CD14-positive monocyte (primary cell): ENCODE measurements at regions of chr9 and their contacts with region 1.

Region 1: DNA sequence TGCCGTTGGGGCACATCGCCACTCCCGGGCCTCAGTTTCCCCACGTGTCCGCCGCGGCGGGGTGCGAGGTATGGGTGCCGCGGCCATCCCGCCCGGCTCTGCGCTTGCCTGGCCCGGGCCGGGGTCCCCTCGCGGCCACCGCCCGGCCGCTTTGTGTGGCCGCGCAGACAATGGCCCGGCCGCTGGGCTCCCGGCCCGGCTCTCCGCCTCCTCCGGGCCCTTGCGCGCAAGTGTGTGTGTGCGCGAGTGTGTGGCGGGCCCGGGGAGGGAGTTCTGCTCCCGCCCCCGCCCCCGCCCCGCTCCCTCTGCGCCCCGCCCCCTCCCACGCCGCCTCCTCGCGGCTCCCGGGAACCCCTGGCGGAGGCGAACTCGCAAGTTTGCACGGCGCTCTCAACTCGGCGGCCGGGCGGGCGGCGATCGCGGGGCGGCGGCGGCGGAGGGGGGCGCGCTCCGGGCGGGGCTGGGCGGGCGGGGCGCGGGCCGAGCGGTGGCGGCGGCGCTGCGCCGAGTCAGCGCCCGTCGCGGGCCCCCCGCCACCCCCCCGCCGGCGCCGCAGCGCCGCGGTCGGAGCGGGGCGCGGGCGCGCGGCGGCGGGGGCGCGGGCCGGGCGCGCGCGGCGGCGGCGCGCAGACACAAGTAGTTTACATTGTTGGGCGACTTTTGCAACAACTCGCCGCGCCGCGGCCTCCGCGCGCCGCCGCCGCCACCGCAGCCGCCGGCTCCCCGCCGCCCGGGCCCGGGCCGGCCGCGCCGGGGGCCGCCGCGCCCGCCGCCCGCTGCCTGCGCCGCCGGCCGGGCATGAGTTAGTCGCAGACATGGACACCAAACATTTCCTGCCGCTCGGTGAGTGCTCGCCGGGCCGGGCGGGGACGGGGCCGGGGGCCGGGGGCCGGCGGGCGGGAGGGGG is at the start of gene RXRA:
- DNase-seq: peak; percentile 62 to 82 (median 78)
- H3K4me3 ChIP-seq: peak within 1 kb of the TSS; percentile 73 to 97 (median 74)
- H3K4me3 Mint-ChIP-seq: peak within 1 kb of the TSS; percentile 93 to 97
- H3K27ac ChIP-seq: peak within 1 kb of the TSS; percentile 81 to 90
- H3K27ac Mint-ChIP-seq: peak within 1 kb of the TSS; percentile 80 to 95 (median 88)
- H3K4me1 ChIP-seq: peaks cover 50 to 63% of the 10 kb centered on the region in 2 donors
- H3K4me1 Mint-ChIP-seq: peaks cover 52% of the 10 kb centered on the region
- H3K27me3 ChIP-seq: peaks cover 0 to 6% of the 10 kb centered on the region in 2 donors
- H3K27me3 Mint-ChIP-seq: peaks cover 16 to 24% (median 18%) of the 10 kb centered on the region in 3 donors
- CTCF ChIP-seq: no peak
- polyA plus RNA-seq, gene RXRA: 15.8 to 91.0 (median 23.2) TPM

Region 2: GRCh38 chr9:134067904-134068743 is 257.9 kb before region 1 on chr9 and contains the start of gene BRD3:
- intact Hi-C with region 1: loop called in 1 of 2 experiments (anchors 10 kb)
- DNase-seq: peak; percentile 70 to 83 (median 77)
- H3K4me3 ChIP-seq: peak within 1 kb of the TSS; percentile 53 to 87 (median 76)
- H3K4me3 Mint-ChIP-seq: peak within 1 kb of the TSS; percentile 87 to 94
- H3K27ac ChIP-seq: peak within 1 kb of the TSS; percentile 61 to 80
- H3K27ac Mint-ChIP-seq: peak within 1 kb of the TSS; percentile 84 to 95 (median 92)
- H3K4me1 ChIP-seq: peaks cover 37 to 43% of the 10 kb centered on the region in 2 donors
- H3K4me1 Mint-ChIP-seq: peaks cover 38% of the 10 kb centered on the region
- H3K27me3 ChIP-seq: peaks cover 0 to 19% of the 10 kb centered on the region in 2 donors
- H3K27me3 Mint-ChIP-seq: peaks cover 21 to 27% (median 23%) of the 10 kb centered on the region in 3 donors
- CTCF ChIP-seq: no peak
- polyA plus RNA-seq, gene BRD3: 16.4 to 18.2 (median 17.1) TPM

Region 3: GRCh38 chr9:134243778-134244467 is 82.1 kb before region 1 on chr9:
- intact Hi-C with region 1: loop called in 1 of 2 experiments (anchors 10 kb)
- DNase-seq: peak; percentile 93 to 97 (median 97)
- H3K4me3 ChIP-seq: peak overlapping the region in 1 of 3 experiments; percentile 35
- H3K4me3 Mint-ChIP-seq: peak overlapping the region in 1 of 2 donors; percentile 86
- H3K27ac ChIP-seq: peak overlapping the region; percentile 24 to 27
- H3K27ac Mint-ChIP-seq: peak overlapping the region; percentile 66 to 95 (median 90)
- H3K4me1 ChIP-seq: peaks cover 25 to 33% of the 10 kb centered on the region in 2 donors
- H3K4me1 Mint-ChIP-seq: peaks cover 34% of the 10 kb centered on the region
- H3K27me3 ChIP-seq: peaks cover 0 to 13% of the 10 kb centered on the region in 2 donors
- H3K27me3 Mint-ChIP-seq: peaks cover 21 to 25% (median 23%) of the 10 kb centered on the region in 3 donors
- CTCF ChIP-seq: no peak

Region 4: DNA sequence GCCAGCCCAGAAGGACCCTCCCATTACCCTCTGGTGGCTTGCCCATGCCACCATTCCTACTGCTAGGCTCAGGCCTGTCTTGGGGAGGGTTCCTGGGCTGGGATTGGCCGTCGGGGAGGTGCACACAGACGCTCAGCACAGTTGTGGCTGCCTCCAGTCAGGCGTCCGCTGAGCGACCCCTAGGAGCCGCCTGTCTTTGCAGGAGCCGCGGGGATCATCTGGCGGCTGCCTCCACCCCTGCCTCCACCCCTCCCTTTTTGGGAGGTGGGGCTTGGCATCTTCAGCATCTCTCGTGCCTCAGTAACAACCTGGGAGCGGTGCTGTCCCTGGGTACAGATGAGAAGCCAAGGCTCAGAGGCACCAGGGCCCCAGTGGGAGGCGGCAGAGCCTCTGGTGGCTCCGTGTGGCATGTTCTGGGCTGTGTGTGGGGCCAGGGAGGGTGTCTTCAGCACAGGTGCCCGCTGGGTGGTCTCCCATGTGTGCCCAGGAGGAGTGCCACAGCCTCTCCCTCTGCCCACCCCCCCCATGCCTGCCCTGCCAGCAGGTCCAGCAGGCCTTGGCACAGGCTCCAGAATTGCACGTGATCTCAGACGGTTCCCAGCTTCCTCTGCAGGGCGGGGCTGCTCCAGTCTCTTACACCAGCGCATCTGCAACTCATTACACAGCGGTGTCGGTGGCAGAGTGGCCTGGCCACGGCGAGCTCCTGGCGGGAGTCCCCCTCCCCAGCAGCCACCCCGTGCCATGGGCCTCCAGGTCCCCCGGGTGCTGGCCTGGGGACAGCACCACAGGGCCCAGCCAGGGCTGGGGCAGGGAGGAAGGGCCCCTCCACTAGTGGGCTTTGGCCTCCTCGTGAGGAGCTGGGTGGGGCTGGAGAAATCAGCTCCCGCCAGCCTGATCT is 40.0 kb after region 1 on chr9:
- intact Hi-C with region 1: loop called (anchors 5 kb)
- DNase-seq: peak; percentile 90 to 96 (median 95)
- H3K4me3 ChIP-seq: peak overlapping the region in 2 of 3 experiments; percentile 2 to 66
- H3K4me3 Mint-ChIP-seq: peak overlapping the region; percentile 31 to 73
- H3K27ac ChIP-seq: peak overlapping the region; percentile 85 to 99
- H3K27ac Mint-ChIP-seq: peak overlapping the region; percentile 92 to 97 (median 96)
- H3K4me1 ChIP-seq: peaks cover 75 to 100% of the 10 kb centered on the region in 2 donors
- H3K4me1 Mint-ChIP-seq: peaks cover 80% of the 10 kb centered on the region
- H3K27me3 ChIP-seq: no peaks in the 10 kb centered on the region
- H3K27me3 Mint-ChIP-seq: no peaks in the 10 kb centered on the region
- CTCF ChIP-seq: no peak

Region 5: GRCh38 chr9:134407123-134407808 is 81.2 kb after region 1 on chr9:
- intact Hi-C with region 1: loop called (anchors 2 to 5 kb)
- DNase-seq: peak; percentile 98 to 99 (median 98)
- H3K4me3 ChIP-seq: peak overlapping the region in 2 of 3 experiments; percentile 22 to 68
- H3K4me3 Mint-ChIP-seq: peak overlapping the region; percentile 69 to 85
- H3K27ac ChIP-seq: peak overlapping the region; percentile 97
- H3K27ac Mint-ChIP-seq: peak overlapping the region; percentile 90 to 100 (median 100)
- H3K4me1 ChIP-seq: peaks cover 99 to 100% of the 10 kb centered on the region in 2 donors
- H3K4me1 Mint-ChIP-seq: peaks cover 94% of the 10 kb centered on the region
- H3K27me3 ChIP-seq: no peaks in the 10 kb centered on the region
- H3K27me3 Mint-ChIP-seq: no peaks in the 10 kb centered on the region
- CTCF ChIP-seq: no peak